Dorsolateral prefrontal cortex (tissue), 120 donors: ENCODE measurements at regions of chr1 and their contacts with region 1.

Region 1: GRCh38 chr1:230713915-230714764 is at the start of gene AGT:
- DNase-seq: peak; percentile 61 to 91 (median 86)
- H3K4me3 ChIP-seq: peak within 1 kb of the TSS; percentile 20 to 69 (median 55)
- H3K27ac ChIP-seq: peak within 1 kb of the TSS; percentile 5 to 94 (median 81)
- H3K27me3 ChIP-seq: no peaks in the 10 kb centered on the region
- CTCF ChIP-seq: peak in 3 of 56 donors; percentile 15 to 28 (median 22)
- total RNA-seq, gene AGT: 75.7 to 327 (median 176) TPM

Region 2: GRCh38 chr1:230753586-230754251 is 39.6 kb after region 1 on chr1:
- intact Hi-C with region 1: loop called in 1 of 2 experiments (anchors 2 kb)
- DNase-seq: peak in 2 of 10 donors; percentile 40 to 43
- H3K4me3 ChIP-seq: peak overlapping the region in 29 of 59 donors; percentile 3 to 51 (median 23)
- H3K27ac ChIP-seq: peak overlapping the region; percentile 86 to 100 (median 95)
- H3K27me3 ChIP-seq: no peaks in the 10 kb centered on the region
- CTCF ChIP-seq: peak in 1 of 56 donors; percentile 14